Motor neuron (in vitro differentiated cells): ENCODE measurements at regions of chr2 and their contacts with region 1.

Region 1: GRCh38 chr2:72150157-72150865 is 2.6 kb upstream of the CYP26B1 start:
- ATAC-seq: peak; percentile 49 to 85 (median 80)
- H3K4me3 ChIP-seq: peak overlapping the region; percentile 3 to 36 (median 11)
- H3K27ac ChIP-seq: no peak overlapping the region
- H3K4me1 ChIP-seq: peaks cover 23 to 31% of the 10 kb centered on the region in 2 donors

Region 2: GRCh38 chr2:71558300-71559051 is 591.8 kb before region 1 on chr2:
- in situ Hi-C with region 1: loop called in 2 of 9 experiments (anchors 25 kb)
- ATAC-seq: peak in 5 of 8 experiments; percentile 5 to 81 (median 47)
- H3K4me3 ChIP-seq: no peak overlapping the region
- H3K27ac ChIP-seq: no peak overlapping the region
- H3K4me1 ChIP-seq: peaks cover 20 to 36% of the 10 kb centered on the region in 2 donors

Region 3: GRCh38 chr2:71609958-71610357 is 540.4 kb before region 1 on chr2:
- in situ Hi-C with region 1: loop called in 1 of 9 experiments (anchors 25 kb)
- ATAC-seq: peak in 4 of 8 experiments; percentile 19 to 65 (median 50)
- H3K4me3 ChIP-seq: no peak overlapping the region
- H3K27ac ChIP-seq: no peak overlapping the region
- H3K4me1 ChIP-seq: peaks cover 0 to 13% of the 10 kb centered on the region in 2 donors

Region 4: DNA sequence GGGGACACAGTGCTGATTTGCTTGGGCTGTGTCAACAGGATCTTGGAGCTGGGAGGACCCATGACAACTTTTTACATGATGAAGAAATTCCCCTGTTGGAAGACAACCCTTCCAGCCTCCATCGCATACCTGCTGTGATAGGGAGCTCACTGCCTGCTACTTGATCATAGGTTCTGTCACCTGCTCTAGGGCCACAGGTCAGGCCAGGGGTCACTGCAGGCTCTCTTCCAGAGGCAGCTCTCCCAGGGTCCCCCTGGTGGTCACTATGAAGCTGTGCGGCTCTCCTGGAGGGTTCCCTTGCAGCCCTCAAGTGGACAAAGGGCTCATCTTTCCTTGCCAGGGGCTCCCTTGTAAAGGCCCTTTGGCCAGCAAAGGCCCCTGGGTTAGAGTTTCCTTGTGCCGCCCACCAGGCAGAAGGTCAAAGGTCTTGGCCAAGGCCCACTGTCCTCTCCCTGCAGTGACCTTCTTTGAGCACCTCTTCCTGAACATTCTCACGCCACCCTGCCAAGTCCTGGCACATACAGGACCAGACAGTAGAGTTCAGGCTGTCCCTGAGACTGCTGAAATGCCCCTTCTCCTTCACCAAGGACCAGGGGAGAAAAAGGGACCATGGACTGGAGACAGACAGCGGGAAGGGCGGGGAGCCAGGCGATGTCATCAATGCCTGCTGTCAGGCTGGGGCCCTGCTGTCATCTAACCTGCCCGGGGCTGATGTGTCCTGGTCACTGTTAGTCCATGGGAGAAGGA is 351.9 kb before region 1 on chr2:
- in situ Hi-C with region 1: loop called in 1 of 9 experiments (anchors 10 kb)
- ATAC-seq: peak in 3 of 8 experiments; percentile 41 to 63 (median 52)
- H3K4me3 ChIP-seq: no peak overlapping the region
- H3K27ac ChIP-seq: no peak overlapping the region
- H3K4me1 ChIP-seq: peaks cover 22 to 29% of the 10 kb centered on the region in 2 donors

Region 5: GRCh38 chr2:71923887-71924533 is 226.3 kb before region 1 on chr2:
- in situ Hi-C with region 1: loop called in 3 of 9 experiments (anchors 10 to 25 kb)
- ATAC-seq: peak; percentile 35 to 98 (median 71)
- H3K4me3 ChIP-seq: no peak overlapping the region
- H3K27ac ChIP-seq: no peak overlapping the region
- H3K4me1 ChIP-seq: peaks cover 0 to 2% of the 10 kb centered on the region in 2 donors

Region 6: GRCh38 chr2:72579591-72580180 is 429.4 kb after region 1 on chr2:
- in situ Hi-C with region 1: loop called in 1 of 9 experiments (anchors 25 kb)
- ATAC-seq: peak in 4 of 8 experiments; percentile 35 to 66 (median 54)
- H3K4me3 ChIP-seq: no peak overlapping the region
- H3K27ac ChIP-seq: no peak overlapping the region
- H3K4me1 ChIP-seq: no peaks in the 10 kb centered on the region